HCT116 (cell line): ENCODE measurements at regions of chr1 and their contacts with region 1.

Region 1: GRCh38 chr1:209627732-209628196 is 24.5 kb downstream of the LAMB3 start:
- DNase-seq: peak; percentile 35
- ATAC-seq: peak; percentile 96
- H3K4me3 ChIP-seq: no peak overlapping the region
- H3K27ac ChIP-seq: no peak overlapping the region
- H3K4me1 ChIP-seq: peaks cover 0 to 7% of the 10 kb centered on the region in 2 experiments; a peak in 2 of 4 replicates
- H3K27me3 ChIP-seq: no peaks in the 10 kb centered on the region
- CTCF ChIP-seq: peak; percentile 79 to 94 (median 91)
- POLR2A ChIP-seq: no peak
- RAD21 ChIP-seq: peak; percentile 84

Region 2: GRCh38 chr1:209416039-209416438 is 211.7 kb before region 1 on chr1:
- CTCF ChIA-PET with region 1: no interaction called
- POLR2A ChIA-PET with region 1: no interaction called
- RAD21 ChIA-PET with region 1: no interaction called
- intact Hi-C with region 1: no loop called
- DNase-seq: no peak
- ATAC-seq: peak; percentile 59; the same call in 1 of the 2 replicates
- H3K4me3 ChIP-seq: no peak overlapping the region
- H3K27ac ChIP-seq: no peak overlapping the region
- H3K4me1 ChIP-seq: peaks cover 0 to 17% of the 10 kb centered on the region in 2 experiments; a peak in 2 of 4 replicates
- H3K27me3 ChIP-seq: no peaks in the 10 kb centered on the region
- CTCF ChIP-seq: no peak
- POLR2A ChIP-seq: no peak
- RAD21 ChIP-seq: no peak

Region 3: GRCh38 chr1:209565759-209566678 is 61.7 kb before region 1 on chr1:
- CTCF ChIA-PET with region 1: interaction called, 13 read pairs
- POLR2A ChIA-PET with region 1: no interaction called
- RAD21 ChIA-PET with region 1: interaction called in 1 of 2 experiments, 3 read pairs
- intact Hi-C with region 1: loop called (anchors 2 kb)
- DNase-seq: peak; percentile 78
- ATAC-seq: peak; percentile 96
- H3K4me3 ChIP-seq: no peak overlapping the region
- H3K27ac ChIP-seq: no peak overlapping the region
- H3K4me1 ChIP-seq: peaks cover 0 to 6% of the 10 kb centered on the region in 2 experiments; a peak in 1 of 4 replicates
- H3K27me3 ChIP-seq: peaks cover 10% of the 10 kb centered on the region; the same call in 1 of the 2 replicates
- CTCF ChIP-seq: peak; percentile 74 to 84 (median 83); a peak in 5 of 6 replicates
- POLR2A ChIP-seq: no peak
- RAD21 ChIP-seq: peak; percentile 83

Region 4: GRCh38 chr1:209601809-209602657 is 25.7 kb before region 1 on chr1:
- CTCF ChIA-PET with region 1: no interaction called
- POLR2A ChIA-PET with region 1: no interaction called
- RAD21 ChIA-PET with region 1: no interaction called
- intact Hi-C with region 1: loop called (anchors 1 kb)
- DNase-seq: peak; percentile 52
- ATAC-seq: peak; percentile 100
- H3K4me3 ChIP-seq: no peak overlapping the region
- H3K27ac ChIP-seq: no peak overlapping the region
- H3K4me1 ChIP-seq: 0 out of 4 replicates have a peak, but pooled peaks cover 0 to 6% of the 10 kb centered on the region in 2 experiments
- H3K27me3 ChIP-seq: no peaks in the 10 kb centered on the region
- CTCF ChIP-seq: peak; percentile 79 to 93 (median 83)
- POLR2A ChIP-seq: no peak
- RAD21 ChIP-seq: peak; percentile 94

Region 5: GRCh38 chr1:209674957-209675564 is 47.3 kb after region 1 on chr1 and contains the start of gene G0S2:
- CTCF ChIA-PET with region 1: no interaction called
- POLR2A ChIA-PET with region 1: no interaction called
- RAD21 ChIA-PET with region 1: no interaction called
- intact Hi-C with region 1: no loop called
- DNase-seq: no peak
- ATAC-seq: no peak
- H3K4me3 ChIP-seq: no peak within 1 kb of the TSS
- H3K27ac ChIP-seq: no peak within 1 kb of the TSS
- H3K4me1 ChIP-seq: peaks cover 0 to 7% of the 10 kb centered on the region in 2 experiments; a peak in 1 of 4 replicates
- H3K27me3 ChIP-seq: no peaks in the 10 kb centered on the region
- CTCF ChIP-seq: no peak
- POLR2A ChIP-seq: no peak
- RAD21 ChIP-seq: no peak
- total RNA-seq, gene G0S2: not detected